HCT116 (cell line): ENCODE measurements at regions of chr2 and their contacts with region 1.

Region 1: DNA sequence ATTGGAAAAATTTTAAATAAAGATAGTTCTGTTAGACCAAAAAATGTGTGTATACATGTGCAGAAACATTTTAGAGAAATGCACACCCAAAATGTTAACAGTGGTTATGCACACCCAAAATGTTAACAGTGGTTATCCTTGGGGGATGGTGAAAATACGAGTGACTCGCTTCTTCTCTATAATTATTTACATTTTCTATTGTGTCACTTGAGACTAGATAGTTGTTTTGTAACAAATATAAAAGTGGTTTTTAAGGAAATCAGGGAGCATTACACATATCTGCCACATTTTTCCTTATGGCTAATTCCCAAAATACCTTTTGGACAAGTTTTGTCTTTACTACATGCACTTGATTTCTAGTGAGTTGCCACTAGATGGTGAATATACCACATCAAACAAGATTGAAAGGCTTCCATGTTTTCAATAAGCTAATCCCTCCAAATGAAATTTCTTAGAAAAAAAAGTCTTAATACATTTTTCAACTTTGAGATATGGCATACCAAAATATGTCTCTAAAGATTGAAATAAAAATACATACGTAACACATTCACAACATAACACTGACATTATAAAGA is 9.0 kb upstream of the HIBCH start:
- DNase-seq: no peak
- ATAC-seq: no peak
- H3K4me3 ChIP-seq: no peak overlapping the region
- H3K27ac ChIP-seq: no peak overlapping the region
- H3K4me1 ChIP-seq: no peaks in the 10 kb centered on the region
- H3K27me3 ChIP-seq: no peaks in the 10 kb centered on the region
- CTCF ChIP-seq: peak; percentile 17 to 46 (median 38); a peak in 3 of 6 replicates
- POLR2A ChIP-seq: no peak
- RAD21 ChIP-seq: peak; percentile 58

Region 2: DNA sequence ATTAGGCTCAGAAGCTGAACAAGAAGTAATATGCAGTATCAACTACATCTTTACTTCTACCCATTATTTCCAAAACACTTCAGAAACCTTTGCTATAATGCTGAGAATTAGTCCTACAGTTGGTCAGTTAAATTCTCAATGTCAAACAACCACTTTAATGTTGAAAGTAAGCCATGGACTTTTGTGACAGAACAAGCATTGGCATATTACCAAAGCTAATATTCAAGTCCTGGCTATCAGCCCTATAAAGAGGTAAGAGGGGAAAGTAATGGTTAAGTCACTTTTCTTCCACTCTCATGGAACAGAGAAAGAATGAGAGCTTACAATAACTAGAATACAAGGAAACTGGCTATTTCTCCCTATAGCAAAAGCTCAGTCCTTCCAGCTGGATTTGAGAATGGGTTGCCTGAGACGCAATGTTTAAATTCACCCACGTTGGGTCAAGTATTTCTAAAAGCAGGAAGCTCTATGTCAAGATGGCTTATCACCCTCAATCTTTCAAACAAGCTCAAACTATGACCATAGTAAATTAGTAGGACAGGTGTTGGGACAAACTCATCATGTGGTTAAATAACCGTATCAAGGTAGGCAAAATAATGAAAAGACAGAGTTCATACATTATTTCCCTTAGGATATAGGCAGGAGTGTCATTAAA is 48.1 kb after region 1 on chr2:
- CTCF ChIA-PET with region 1: no interaction called
- POLR2A ChIA-PET with region 1: no interaction called
- RAD21 ChIA-PET with region 1: no interaction called
- intact Hi-C with region 1: loop called (anchors 2 kb)
- DNase-seq: no peak
- ATAC-seq: no peak
- H3K4me3 ChIP-seq: no peak overlapping the region
- H3K27ac ChIP-seq: no peak overlapping the region
- H3K4me1 ChIP-seq: no peaks in the 10 kb centered on the region
- H3K27me3 ChIP-seq: no peaks in the 10 kb centered on the region
- CTCF ChIP-seq: no peak
- POLR2A ChIP-seq: no peak
- RAD21 ChIP-seq: no peak

Region 3: GRCh38 chr2:190511104-190511503 is 182.4 kb after region 1 on chr2:
- CTCF ChIA-PET with region 1: no interaction called
- POLR2A ChIA-PET with region 1: no interaction called
- RAD21 ChIA-PET with region 1: no interaction called
- intact Hi-C with region 1: loop called (anchors 5 kb)
- DNase-seq: peak; percentile 3
- ATAC-seq: no peak
- H3K4me3 ChIP-seq: no peak overlapping the region
- H3K27ac ChIP-seq: no peak overlapping the region
- H3K4me1 ChIP-seq: no peaks in the 10 kb centered on the region
- H3K27me3 ChIP-seq: no peaks in the 10 kb centered on the region
- CTCF ChIP-seq: peak; percentile 31 to 71 (median 55); a peak in 5 of 6 replicates
- POLR2A ChIP-seq: no peak
- RAD21 ChIP-seq: peak; percentile 83